ENCODE measurements at regions of chr10 and their contacts with region 1.

Region 1: GRCh38 chr10:125929618-125930017 is 33.3 kb downstream of the FANK1 start:
- DNase-seq: no peak
- H3K4me3 ChIP-seq: no peak overlapping the region
- H3K27ac ChIP-seq: peak overlapping the region; percentile 62
- H3K4me1 ChIP-seq: peaks cover 4% of the 10 kb centered on the region
- H3K27me3 ChIP-seq: no peaks in the 10 kb centered on the region
- CTCF ChIP-seq: no peak

Region 2: GRCh38 chr10:125868372-125868975 is 61.1 kb before region 1 on chr10:
- intact Hi-C with region 1: loop called (anchors 5 kb)
- DNase-seq: no peak
- H3K4me3 ChIP-seq: no peak overlapping the region
- H3K27ac ChIP-seq: no peak overlapping the region
- H3K4me1 ChIP-seq: no peaks in the 10 kb centered on the region
- H3K27me3 ChIP-seq: no peaks in the 10 kb centered on the region
- CTCF ChIP-seq: peak; percentile 80

Region 3: GRCh38 chr10:126130271-126130731 is 200.7 kb after region 1 on chr10:
- intact Hi-C with region 1: no loop called
- DNase-seq: no peak
- H3K4me3 ChIP-seq: no peak overlapping the region
- H3K27ac ChIP-seq: no peak overlapping the region
- H3K4me1 ChIP-seq: no peaks in the 10 kb centered on the region
- H3K27me3 ChIP-seq: no peaks in the 10 kb centered on the region
- CTCF ChIP-seq: no peak

Measured in colonic mucosa (tissue), 4 donors.